Activated CD4-positive, alpha-beta T cell treated with anti-CD3 and anti-CD28 coated beads, Interleukin-2, amount 10 ng/mL, durations not matched to agents 24 days and 14 days (primary cell): ENCODE measurements at regions of chr7 and their contacts with region 1.

Region 1: DNA sequence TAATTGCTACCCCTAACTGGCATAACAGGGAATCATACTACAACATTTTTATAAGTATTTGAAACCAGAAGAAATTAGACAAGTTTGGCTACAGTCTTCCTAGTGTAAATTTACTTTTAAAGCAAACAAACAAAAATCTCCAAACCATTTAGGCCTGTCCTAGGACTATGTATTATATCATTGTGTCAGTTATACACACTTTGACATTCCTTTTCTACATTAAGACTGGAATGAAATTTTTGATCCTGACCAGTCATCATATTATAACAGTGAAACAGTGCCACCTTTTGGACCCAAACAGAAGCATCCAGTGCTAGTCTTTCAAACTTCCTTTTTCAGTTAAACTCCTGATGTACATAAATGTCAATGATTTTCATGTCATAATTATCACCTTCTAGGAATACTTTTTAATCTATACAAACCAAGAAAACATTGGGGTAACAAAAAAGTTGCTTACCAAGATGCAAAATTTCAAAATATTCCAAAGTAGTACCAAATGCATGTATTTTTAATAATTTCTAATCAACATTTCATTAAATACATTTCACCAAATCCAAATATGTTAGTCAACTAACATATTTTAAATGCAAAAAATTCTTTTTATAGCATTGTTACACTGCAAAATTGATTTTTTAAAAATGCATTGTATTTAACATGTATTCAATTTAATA is 75.7 kb downstream of the IMMP2L start:
- DNase-seq: peak; percentile 66
- H3K4me3 Mint-ChIP-seq: no peak overlapping the region
- H3K27ac Mint-ChIP-seq: no peak overlapping the region
- H3K4me1 Mint-ChIP-seq: peaks cover 2% of the 10 kb centered on the region
- H3K27me3 Mint-ChIP-seq: no peaks in the 10 kb centered on the region

Region 2: DNA sequence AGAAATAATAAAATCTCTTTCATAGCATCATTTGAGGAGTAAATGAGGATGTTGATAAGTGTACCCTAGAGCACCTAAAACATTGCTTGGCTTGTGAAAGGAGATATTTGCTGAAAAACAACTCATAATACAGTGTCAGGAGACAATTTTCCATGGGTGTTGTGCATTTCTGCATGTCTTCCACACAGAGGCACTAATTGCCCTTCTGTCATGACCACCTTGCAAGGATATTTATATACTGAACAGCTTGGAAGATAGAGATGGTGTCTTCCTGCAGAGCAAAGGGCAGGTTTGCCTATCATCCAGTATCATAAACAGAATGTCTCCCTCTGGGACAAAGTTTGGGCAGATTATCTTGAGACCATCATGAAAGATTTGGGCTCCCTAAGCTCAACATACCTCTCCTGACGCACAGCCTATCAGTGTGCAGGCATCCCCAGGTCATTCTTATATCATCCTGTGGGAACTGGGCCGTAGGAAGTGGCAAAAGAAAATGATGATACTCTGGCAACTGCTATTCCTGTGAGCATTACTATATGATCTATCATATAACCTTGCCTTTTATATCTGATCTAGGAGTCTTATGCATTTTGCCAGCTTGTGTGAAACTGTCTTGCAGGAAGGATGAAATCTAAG is 890.8 kb before region 1 on chr7:
- intact Hi-C with region 1: loop called (anchors 10 kb)
- DNase-seq: peak; percentile 62
- H3K4me3 Mint-ChIP-seq: no peak overlapping the region
- H3K27ac Mint-ChIP-seq: no peak overlapping the region
- H3K4me1 Mint-ChIP-seq: peaks cover 9% of the 10 kb centered on the region
- H3K27me3 Mint-ChIP-seq: peaks cover 3% of the 10 kb centered on the region

Region 3: DNA sequence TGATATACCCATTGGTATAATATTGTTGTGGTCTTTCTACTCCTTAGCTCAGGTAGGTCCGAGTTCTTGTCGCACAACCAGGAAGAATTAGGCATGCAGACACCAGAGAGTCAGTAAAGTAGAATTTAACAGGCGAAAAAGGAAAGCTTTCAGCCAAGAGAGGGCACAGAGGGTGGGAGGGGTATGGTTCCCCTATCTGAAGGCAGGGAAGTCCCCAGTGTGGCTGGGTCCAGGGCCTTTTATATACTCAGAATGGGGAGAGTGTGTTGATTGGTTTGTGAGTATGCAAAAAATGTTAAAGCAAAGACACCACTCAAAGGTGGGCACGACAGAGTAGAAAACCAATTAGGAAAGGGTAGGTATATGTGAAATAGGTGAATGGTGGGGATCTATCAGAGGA is 21.8 kb after region 1 on chr7:
- intact Hi-C with region 1: no loop called
- DNase-seq: no peak
- H3K4me3 Mint-ChIP-seq: no peak overlapping the region
- H3K27ac Mint-ChIP-seq: no peak overlapping the region
- H3K4me1 Mint-ChIP-seq: no peaks in the 10 kb centered on the region
- H3K27me3 Mint-ChIP-seq: no peaks in the 10 kb centered on the region